ENCODE measurements at regions of chr10 and their contacts with region 1.

Region 1: GRCh38 chr10:68792115-68792514 is 35.2 kb upstream of the STOX1 start:
- DNase-seq: no peak
- H3K4me3 ChIP-seq: no peak overlapping the region
- H3K27ac ChIP-seq: no peak overlapping the region
- H3K4me1 ChIP-seq: no peaks in the 10 kb centered on the region
- H3K27me3 ChIP-seq: no peaks in the 10 kb centered on the region
- CTCF ChIP-seq: peak; percentile 20

Region 2: DNA sequence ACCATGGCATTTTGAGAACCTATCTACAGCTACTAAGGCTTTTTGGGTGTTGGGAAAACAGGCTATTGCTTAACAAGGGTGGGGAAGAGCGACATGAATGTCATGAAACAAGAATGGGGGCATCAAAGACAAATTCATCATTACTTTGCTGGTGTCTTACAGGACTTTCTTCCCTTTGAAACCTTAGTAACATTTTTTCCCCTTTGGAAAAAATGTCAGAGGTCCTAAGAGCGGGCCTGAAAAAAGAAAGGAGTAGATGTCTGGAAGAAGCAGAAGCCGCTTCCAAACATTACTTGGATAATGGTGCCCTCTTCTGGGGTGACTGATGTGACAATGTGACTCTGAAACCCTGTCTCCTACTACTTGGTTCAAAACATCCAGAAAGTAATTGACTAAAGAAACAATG is 105.2 kb after region 1 on chr10:
- intact Hi-C with region 1: loop called (anchors 10 kb)
- DNase-seq: no peak
- H3K4me3 ChIP-seq: no peak overlapping the region
- H3K27ac ChIP-seq: no peak overlapping the region
- H3K4me1 ChIP-seq: peaks cover 22% of the 10 kb centered on the region
- H3K27me3 ChIP-seq: no peaks in the 10 kb centered on the region
- CTCF ChIP-seq: peak; percentile 67